Mucosa of descending colon (tissue), 3 donors: ENCODE measurements at regions of chr12 and their contacts with region 1.

Region 1: DNA sequence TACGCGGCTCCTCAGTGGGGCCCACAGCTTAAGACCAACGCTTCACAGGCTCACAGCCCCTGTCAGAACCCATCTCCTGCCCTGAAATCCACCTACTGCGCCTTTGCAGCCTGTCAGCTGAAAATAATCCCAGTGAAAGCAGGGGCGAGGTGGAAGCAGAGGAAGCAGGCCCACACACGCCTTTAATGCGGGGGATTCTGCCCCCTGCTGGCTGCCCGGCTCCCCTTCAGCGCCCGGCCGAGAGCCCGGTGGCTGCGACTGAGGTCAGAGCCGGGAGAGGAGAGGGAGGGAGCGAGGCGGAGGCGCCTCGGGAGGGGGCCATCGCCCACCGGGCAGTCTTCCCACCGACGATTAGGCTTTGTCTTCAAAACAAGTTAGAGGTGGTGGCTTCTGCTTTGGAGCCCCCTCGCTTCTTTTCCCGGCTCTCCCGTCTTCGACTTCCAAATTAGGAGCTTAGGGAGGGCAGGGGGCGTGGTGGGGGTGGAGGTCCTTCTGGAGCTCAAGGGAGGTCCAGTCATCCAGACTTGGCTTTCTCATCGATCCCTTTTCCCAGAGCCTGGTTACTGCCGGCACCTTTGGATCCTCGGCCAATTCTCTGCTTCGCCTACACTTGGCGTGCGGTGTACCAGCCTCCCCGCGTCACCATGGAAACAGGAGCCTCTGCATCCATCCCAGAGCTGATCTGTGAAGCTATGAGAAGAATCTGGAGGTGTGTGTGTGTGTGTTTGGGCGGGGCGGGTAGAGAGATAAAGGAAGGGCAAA is 25.2 kb upstream of the RND1 start:
- DNase-seq: peak; percentile 72 to 89 (median 88)
- ATAC-seq: peak; percentile 99
- H3K4me3 ChIP-seq: no peak overlapping the region
- H3K4me1 ChIP-seq: no peaks in the 10 kb centered on the region
- CTCF ChIP-seq: peak; percentile 92

Region 2: DNA sequence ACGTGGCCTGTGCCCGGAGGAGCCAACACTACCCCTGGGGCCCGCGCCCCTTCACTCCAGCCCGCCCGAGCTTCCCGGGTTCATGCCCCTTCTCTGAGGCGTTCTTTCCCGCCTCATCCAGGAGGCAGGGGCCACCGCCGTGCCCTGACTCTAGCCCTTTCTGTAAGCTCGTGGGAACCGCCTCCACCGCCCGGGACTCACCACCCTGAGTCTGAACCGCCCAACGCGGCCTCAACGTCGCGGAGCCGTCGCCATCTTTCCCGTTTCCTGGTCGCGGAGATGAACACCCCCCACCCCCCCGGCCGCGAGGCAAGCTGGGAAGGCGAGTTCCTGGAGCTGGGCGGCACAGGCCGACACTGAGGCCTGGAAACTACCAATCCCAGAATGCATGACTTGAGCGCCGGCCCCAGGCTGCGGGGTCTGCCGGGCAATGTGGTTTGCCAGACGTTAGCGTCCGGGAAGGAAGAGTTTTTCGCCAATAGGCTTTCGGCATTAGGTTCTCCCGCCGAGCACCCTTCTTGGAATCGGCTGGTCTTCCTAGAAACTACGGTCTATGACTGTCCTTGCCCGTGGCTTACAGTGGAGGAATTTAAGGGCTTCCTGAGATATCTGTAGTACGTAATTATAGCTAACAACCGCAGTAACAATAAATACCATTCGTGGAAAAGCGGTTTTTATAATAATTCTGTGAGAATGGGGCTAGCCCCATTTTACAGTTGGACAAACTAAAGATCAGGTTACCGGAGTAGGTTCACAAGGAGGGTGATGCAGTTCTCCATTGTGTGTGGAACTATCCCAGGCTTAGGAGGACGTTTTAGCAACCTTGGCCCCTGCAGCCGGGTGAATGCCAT is 38.7 kb before region 1 on chr12 and contains the start of gene DDX23:
- intact Hi-C with region 1: loop called (anchors 5 kb)
- DNase-seq: peak; percentile 92 to 96 (median 93)
- ATAC-seq: peak; percentile 96
- H3K4me3 ChIP-seq: peak within 1 kb of the TSS; percentile 76
- H3K4me1 ChIP-seq: peaks cover 17% of the 10 kb centered on the region
- CTCF ChIP-seq: no peak
- total RNA-seq, gene DDX23: 70.0 to 105 (median 91.0) TPM

Region 3: DNA sequence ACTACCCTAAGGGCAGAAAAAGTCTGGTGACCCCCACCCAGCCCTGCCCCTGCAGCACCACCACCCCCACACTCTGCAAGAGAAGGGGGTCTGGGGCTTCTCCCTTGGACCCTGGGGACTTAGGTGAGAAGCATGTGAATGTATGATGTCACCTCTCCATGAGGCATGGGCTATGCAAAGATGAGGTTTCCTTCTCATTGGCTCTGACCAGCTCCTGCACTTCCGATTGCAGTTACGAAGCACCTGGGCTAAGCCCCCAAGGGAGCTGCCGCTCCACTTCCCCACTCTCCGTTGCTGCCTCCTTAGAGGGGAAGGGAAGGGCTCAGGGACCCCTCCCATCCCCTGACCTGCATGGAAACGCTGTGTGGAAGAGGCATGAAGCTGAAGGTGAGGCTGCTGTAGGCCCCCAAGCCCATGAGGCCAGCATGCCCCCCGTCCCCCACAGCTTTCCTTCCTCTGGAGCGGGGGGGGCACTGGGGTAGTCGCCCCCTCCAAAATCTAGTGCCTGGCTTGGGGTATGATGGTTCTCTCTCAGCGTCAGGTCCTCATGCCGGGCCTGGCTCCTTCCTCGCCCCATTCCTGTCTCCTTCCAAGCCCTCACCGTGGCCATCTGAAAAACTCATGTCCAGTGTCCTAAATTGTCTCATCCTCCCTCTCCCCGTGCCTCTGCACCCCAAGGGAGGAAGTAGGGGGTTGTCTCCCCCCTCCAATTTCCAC is 33.4 kb before region 1 on chr12:
- intact Hi-C with region 1: loop called (anchors 5 kb)
- DNase-seq: no peak
- ATAC-seq: no peak
- H3K4me3 ChIP-seq: no peak overlapping the region
- H3K4me1 ChIP-seq: peaks cover 3% of the 10 kb centered on the region
- CTCF ChIP-seq: no peak